ENCODE measurements at regions of chr4 and their contacts with region 1.

Region 1: GRCh38 chr4:169010125-169011023 is at the start of gene CBR4:
- DNase-seq: peak; percentile 92

Region 2: GRCh38 chr4:168995537-168996295 is 14.7 kb before region 1 on chr4:
- CTCF ChIA-PET with region 1: interaction called, 16 read pairs
- POLR2A ChIA-PET with region 1: interaction called, 35 read pairs
- DNase-seq: no peak

Region 3: DNA sequence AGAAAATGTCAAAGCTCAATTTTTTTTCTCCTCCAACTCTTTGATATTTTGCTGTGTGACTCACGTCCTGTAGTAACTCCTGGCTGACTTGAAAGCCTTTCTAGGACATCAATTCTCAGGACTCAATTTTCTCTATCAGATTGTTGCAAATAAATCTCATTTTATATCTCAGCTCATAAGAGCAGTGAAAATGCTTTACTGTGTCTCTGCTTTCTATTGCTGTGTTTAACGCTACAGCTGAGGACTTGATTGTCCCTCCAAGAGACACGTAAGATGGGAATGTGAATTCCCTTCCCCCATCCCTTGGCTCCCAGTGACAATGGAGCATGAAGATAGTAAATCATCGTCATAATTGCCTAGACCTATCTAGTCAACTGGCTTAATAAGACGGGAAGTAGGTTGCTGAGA is 20.2 kb after region 1 on chr4:
- CTCF ChIA-PET with region 1: interaction called, 5 read pairs
- POLR2A ChIA-PET with region 1: interaction called, 16 read pairs
- DNase-seq: no peak

Region 4: GRCh38 chr4:169254546-169254983 is 244.2 kb after region 1 on chr4:
- CTCF ChIA-PET with region 1: no interaction called
- POLR2A ChIA-PET with region 1: interaction called, 10 read pairs
- DNase-seq: no peak

Region 5: DNA sequence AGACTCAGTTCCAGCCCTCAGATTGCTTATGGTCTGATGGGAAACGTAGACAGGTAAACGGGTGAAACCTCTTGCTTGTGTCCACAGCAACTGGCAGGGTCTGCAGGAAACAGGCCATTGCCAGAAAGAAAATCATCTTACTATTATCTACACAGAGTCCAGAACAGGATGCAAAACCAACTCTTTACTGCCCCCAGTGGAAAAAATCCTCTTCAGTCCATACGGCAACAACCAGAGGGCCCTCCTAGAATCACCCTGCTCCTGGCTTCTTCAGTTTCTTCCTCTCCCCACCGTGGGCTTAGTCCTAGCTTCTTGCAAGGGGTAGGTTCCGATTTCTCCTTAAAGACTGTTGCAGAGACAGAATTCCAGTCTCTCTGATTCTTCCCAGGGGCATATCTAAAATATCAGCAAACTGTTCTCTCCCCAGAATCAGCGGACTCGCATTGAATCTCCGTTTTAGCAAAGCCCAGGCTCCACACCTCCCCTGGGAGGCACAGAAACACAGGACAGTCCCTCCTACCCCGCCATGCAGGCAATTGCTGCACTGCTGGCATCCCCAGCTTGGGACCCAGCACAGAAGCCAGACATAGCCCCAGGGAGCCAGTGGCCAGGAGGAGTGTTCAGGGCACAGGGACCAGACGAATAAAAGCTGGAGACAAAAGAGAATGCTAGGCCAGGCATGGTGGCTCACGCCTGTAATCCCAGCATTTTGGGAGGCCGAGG is 301.4 kb after region 1 on chr4:
- CTCF ChIA-PET with region 1: interaction called, 5 read pairs
- POLR2A ChIA-PET with region 1: interaction called, 16 read pairs
- DNase-seq: peak; percentile 72

Measured in HEK293T (cell line).